Mammary epithelial cell (primary cell): ENCODE measurements at regions of chrX and their contacts with region 1.

Region 1: DNA sequence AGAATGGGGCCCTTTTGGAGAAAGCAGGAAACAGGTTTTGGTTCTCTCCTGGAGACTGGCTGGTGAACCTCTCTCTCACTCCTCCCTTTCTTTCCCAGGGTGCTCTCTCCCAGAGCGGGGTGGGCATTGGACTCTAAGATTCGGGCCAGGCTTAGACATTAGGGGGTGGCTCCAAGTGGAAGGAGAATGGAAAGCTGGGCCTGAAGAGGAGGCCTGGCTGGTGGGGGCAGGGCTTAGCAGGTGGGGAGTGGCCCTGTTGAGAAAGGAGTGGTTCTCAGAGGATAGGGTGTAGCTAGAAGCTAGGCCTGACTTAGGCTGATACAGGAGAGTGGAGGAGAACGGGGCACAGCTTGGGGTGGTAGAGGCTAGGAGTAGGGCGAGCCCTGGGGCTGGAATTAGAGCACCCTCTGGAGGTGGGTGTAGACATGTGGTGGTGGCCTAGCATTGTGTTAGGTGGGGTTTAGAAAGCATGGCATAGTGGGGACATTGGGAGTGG is 5.7 kb downstream of the PLP2 start:
- DNase-seq: peak; percentile 46
- H3K4me3 ChIP-seq: no peak overlapping the region
- H3K27ac ChIP-seq: no peak overlapping the region
- H3K4me1 ChIP-seq: peaks cover 30% of the 10 kb centered on the region
- H3K27me3 ChIP-seq: no peaks in the 10 kb centered on the region
- CTCF ChIP-seq: peak in 1 of 2 donors; percentile 30

Region 2: DNA sequence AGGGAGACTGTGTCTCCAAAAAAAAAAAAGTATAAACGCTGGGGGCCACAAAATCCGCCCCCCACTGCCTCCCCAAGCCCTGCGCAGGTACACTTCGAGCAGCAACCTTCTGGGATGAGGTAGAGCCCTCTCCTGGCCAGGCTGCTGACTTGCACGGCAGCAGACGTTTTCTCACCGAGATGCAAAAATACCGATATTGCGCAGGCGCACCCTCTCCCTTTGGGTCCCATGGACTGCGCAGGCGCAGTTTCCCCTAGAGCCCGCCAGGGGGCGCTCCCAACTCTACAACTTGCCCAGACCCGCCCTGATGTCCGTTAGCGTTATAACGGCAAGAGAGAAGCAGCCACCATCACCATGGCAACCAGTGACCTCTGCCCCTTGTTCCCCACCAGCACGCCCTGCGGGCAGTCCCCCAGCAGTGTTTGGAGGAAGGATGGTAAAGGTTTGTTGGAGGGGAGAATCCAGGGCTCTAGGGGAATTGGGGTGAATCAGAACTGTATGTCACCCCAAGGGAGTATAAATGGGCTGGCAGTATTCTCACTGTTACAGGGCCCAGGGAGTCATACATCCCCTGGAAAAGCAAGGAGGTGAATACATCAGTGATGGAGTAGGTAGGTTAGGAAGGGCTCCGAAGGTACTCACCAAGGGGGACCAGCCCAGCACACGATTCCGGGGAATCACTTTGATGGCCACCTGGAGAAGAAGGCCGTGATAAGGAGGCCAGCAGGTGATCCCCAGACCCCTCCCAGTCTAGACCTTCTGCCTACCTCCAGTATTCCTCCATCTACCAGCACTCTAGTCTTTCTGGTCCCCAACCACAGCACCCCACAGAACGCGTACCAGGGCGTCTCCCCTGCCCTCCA is 260.0 kb before region 1 on chrX:
- CTCF ChIA-PET with region 1: no interaction called
- dilution Hi-C with region 1: no loop called
- in situ Hi-C with region 1: no loop called
- intact Hi-C with region 1: no loop called
- DNase-seq: peak; percentile 82
- H3K4me3 ChIP-seq: peak overlapping the region; percentile 8 to 70 (median 66)
- H3K27ac ChIP-seq: peak overlapping the region; percentile 56
- H3K4me1 ChIP-seq: peaks cover 5% of the 10 kb centered on the region
- H3K27me3 ChIP-seq: no peaks in the 10 kb centered on the region
- CTCF ChIP-seq: peak; percentile 88 to 89

Region 3: GRCh38 chrX:49226946-49227345 is 49.6 kb after region 1 on chrX:
- CTCF ChIA-PET with region 1: no interaction called
- dilution Hi-C with region 1: loop called (anchors 5 kb)
- in situ Hi-C with region 1: no loop called
- intact Hi-C with region 1: no loop called
- DNase-seq: no peak
- H3K4me3 ChIP-seq: no peak overlapping the region
- H3K27ac ChIP-seq: no peak overlapping the region
- H3K4me1 ChIP-seq: no peaks in the 10 kb centered on the region
- H3K27me3 ChIP-seq: no peaks in the 10 kb centered on the region
- CTCF ChIP-seq: no peak